ENCODE measurements at regions of chr10 and their contacts with region 1.

Region 1: DNA sequence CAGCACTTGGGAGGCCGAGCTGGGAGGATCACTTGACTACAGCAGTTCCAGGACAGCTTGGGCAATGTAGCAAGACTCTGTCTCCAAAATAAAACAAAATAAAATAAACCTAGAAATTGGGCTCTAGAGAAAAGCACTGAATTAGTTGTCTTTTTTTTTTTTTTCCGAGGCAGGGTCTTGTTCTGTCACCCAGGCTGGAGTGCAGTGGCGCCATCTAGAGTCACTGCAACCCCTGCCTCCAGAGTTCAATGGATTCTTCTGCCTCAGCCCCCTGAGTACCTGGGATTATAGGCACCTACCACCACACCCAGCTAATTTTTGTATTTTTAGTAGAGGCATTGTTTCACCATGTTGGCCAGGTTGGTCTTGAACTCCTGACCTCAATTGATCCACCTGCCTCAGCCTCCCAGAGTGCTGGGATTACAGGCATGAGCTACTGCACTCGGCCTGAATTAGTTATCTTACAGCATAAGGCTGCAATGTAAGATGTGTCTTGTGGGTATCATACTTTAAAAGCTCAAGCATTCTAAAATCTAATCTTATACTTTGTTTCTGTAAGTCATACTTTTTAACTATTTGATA is 12.8 kb downstream of the MEIG1 start:
- DNase-seq: no peak
- CTCF ChIP-seq: peak; percentile 53

Region 2: GRCh38 chr10:14959276-14960057 is 12.5 kb before region 1 on chr10 and contains the start of gene MEIG1:
- CTCF ChIA-PET with region 1: interaction called, 18 read pairs
- POLR2A ChIA-PET with region 1: no interaction called
- DNase-seq: peak; percentile 94
- CTCF ChIP-seq: no peak

Region 3: DNA sequence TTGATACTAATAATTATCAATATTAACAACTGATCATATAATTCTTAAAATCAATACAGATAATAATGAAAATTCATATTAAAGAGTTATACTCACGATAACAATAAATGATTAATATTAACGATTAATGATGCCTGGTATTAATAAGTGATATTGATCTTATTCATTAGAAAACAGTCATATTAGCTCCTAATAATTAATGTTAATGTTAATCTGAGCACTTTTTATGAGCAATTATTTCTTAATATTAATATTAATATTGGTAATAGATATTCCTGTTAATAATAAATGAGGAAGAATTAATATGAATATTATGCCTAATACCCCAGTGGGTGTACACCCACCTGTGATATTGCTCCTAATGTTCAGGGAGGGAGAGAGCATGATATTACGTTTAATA is 10.8 kb after region 1 on chr10:
- CTCF ChIA-PET with region 1: interaction called, 11 read pairs
- POLR2A ChIA-PET with region 1: no interaction called
- DNase-seq: no peak
- CTCF ChIP-seq: no peak

Measured in GM10248 (cell line).